Esophagus squamous epithelium (tissue), 5 donors: ENCODE measurements at regions of chr5 and their contacts with region 1.

Region 1: DNA sequence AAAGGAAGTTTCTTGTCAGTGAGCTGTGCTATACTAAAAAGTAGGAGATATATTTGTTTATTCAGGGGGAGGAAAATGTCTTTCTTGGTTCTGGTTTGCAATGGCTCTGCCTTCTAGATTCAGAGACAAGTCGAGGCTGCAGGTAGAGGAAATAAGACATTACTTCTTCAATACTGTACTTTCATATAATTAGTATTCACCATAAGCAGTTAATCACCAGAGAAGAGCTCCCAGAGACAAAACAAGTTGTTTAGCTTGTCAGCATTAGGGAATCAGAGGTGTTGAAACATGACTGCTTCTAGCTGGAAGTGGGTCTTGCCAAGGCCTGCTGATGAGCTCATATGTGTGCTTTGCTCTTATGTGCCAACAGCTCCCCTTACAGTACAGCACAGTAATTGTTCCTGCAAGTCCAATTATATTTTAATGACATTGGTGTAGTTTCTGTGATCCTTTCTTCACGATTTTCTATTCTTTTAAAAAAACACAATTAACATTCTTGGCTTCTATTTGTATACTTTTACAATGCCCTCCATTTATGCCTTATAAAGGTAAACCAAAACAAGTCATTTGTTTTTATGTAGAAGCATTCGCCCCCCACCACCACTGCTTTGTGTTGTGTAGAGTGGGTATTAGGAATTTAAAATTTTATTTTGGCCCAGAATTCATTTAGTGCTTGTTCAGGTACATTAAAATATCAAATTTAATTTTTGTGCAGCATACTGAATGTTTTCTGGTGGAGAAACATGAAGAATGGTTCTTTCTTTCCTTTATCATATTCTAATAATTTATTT is 112.2 kb downstream of the RPS23 start:
- DNase-seq: peak; percentile 31
- H3K4me3 ChIP-seq: no peak overlapping the region
- H3K27ac ChIP-seq: peak overlapping the region; percentile 42 to 69 (median 60)
- H3K4me1 ChIP-seq: peaks cover 9 to 44% (median 11%) of the 10 kb centered on the region in 3 donors
- H3K27me3 ChIP-seq: no peaks in the 10 kb centered on the region
- CTCF ChIP-seq: peak; percentile 31 to 87 (median 74)
- POLR2A ChIP-seq: no peak

Region 2: DNA sequence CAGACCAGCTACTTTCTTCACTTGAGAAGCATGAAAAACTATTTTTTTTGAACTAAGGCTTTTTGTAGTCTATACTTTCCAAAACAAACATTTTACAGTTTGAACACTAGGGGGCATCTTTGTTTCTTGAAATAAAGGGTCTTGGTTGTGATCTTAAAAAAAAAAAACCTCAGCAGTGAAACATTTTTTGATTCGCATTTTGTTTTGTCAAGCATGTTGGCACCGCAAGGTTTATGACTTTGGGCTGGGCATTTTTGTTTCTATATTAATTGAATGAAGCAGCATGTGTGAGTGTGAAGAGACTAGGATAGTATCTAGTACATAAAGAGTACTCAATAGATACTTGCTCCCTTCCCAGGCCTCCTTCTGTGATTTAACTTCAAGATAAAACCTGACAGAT is 740.4 kb before region 1 on chr5:
- intact Hi-C with region 1: loop called (anchors 10 kb)
- DNase-seq: no peak
- H3K4me3 ChIP-seq: no peak overlapping the region
- H3K27ac ChIP-seq: peak overlapping the region in 2 of 4 donors; percentile 38 to 47
- H3K4me1 ChIP-seq: peaks cover 4 to 49% (median 7%) of the 10 kb centered on the region in 3 donors
- H3K27me3 ChIP-seq: no peaks in the 10 kb centered on the region
- CTCF ChIP-seq: peak in 5 of 6 experiments; percentile 38 to 65 (median 53)
- POLR2A ChIP-seq: no peak

Region 3: GRCh38 chr5:81506900-81507588 is 658.9 kb before region 1 on chr5:
- intact Hi-C with region 1: loop called (anchors 5 kb)
- DNase-seq: no peak
- H3K4me3 ChIP-seq: no peak overlapping the region
- H3K27ac ChIP-seq: peak overlapping the region in 2 of 4 donors; percentile 35 to 38
- H3K4me1 ChIP-seq: peaks cover 0 to 13% (median 0%) of the 10 kb centered on the region in 3 donors
- H3K27me3 ChIP-seq: no peaks in the 10 kb centered on the region
- CTCF ChIP-seq: peak; percentile 45 to 91 (median 80)
- POLR2A ChIP-seq: no peak

Region 4: GRCh38 chr5:81994679-81995078 is 171.3 kb before region 1 on chr5:
- intact Hi-C with region 1: no loop called
- DNase-seq: no peak
- H3K4me3 ChIP-seq: no peak overlapping the region
- H3K27ac ChIP-seq: no peak overlapping the region
- H3K4me1 ChIP-seq: no peaks in the 10 kb centered on the region
- H3K27me3 ChIP-seq: no peaks in the 10 kb centered on the region
- CTCF ChIP-seq: no peak
- POLR2A ChIP-seq: no peak